Panc1 (cell line): ENCODE measurements at regions of chr16 and their contacts with region 1.

Region 1: GRCh38 chr16:30032083-30032819 is 1.2 kb upstream of the TLCD3B start:
- DNase-seq: no peak
- ATAC-seq: peak; percentile 72
- H3K4me3 ChIP-seq: no peak overlapping the region
- H3K27ac ChIP-seq: no peak overlapping the region
- H3K4me1 ChIP-seq: peaks cover 9% of the 10 kb centered on the region
- H3K27me3 ChIP-seq: no peaks in the 10 kb centered on the region
- CTCF ChIP-seq: peak; percentile 91

Region 2: DNA sequence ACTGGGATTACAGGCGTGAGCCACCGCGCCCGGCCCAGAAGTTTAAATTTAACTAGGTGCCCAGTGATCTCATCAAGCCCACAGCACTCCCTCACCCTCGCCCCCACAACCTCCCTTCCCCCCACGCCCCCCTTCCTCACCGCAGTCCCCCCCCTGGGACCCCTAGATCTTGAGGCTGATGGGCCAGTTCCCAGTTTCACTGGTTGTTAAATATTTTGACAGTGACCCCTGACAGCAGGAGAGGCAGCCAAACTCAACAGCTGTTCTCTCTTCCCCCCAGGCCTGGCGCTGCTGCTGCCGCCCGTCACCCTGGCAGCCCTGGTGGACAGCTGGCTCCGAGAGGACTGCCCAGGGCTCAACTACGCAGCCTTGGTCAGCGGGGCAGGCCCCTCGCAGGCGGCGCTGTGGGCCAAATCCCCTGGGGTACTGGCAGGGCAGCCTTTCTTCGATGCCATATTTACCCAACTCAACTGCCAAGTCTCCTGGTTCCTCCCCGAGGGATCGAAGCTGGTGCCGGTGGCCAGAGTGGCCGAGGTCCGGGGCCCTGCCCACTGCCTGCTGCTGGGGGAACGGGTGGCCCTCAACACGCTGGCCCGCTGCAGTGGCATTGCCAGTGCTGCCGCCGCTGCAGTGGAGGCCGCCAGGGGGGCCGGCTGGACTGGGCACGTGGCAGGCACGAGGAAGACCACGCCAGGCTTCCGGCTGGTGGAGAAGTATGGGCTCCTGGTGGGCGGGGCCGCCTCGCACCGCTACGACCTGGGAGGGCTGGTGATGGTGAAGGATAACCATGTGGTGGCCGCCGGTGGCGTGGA is 337.7 kb before region 1 on chr16:
- CTCF ChIA-PET with region 1: interaction called, 3 read pairs
- POLR2A ChIA-PET with region 1: no interaction called
- in situ Hi-C with region 1: no loop called
- intact Hi-C with region 1: loop called (anchors 5 kb)
- DNase-seq: no peak
- ATAC-seq: no peak
- H3K4me3 ChIP-seq: no peak overlapping the region
- H3K27ac ChIP-seq: no peak overlapping the region
- H3K4me1 ChIP-seq: no peaks in the 10 kb centered on the region
- H3K27me3 ChIP-seq: no peaks in the 10 kb centered on the region
- CTCF ChIP-seq: no peak

Region 3: DNA sequence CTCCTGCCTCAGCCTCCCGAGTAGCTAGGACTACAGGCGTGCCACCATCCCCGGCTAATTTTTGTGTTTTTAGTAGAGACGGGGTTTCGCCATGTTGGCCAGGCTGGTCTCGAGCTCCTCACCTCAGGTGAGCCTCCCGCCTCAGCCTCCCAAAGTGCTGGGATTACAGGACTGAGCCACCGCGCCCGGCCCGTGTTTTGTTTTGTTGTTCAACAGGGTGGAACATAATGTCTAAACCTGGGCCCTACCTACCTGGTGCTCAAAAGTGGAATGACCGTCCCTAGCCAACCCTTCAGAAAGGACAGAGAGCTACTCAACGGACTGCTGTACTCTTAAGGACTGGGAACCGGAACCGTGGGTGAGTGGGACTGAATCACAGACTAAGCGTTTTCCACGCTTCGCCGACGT is 242.5 kb before region 1 on chr16:
- CTCF ChIA-PET with region 1: interaction called, 11 read pairs
- POLR2A ChIA-PET with region 1: no interaction called
- in situ Hi-C with region 1: no loop called
- intact Hi-C with region 1: no loop called
- DNase-seq: no peak
- ATAC-seq: peak; percentile 17; the same call in 1 of the 2 replicates
- H3K4me3 ChIP-seq: peak overlapping the region; percentile 88 to 93
- H3K27ac ChIP-seq: peak overlapping the region; percentile 97
- H3K4me1 ChIP-seq: peaks cover 12% of the 10 kb centered on the region
- H3K27me3 ChIP-seq: no peaks in the 10 kb centered on the region
- CTCF ChIP-seq: no peak

Region 4: GRCh38 chr16:29915590-29916247 is 116.5 kb before region 1 on chr16:
- CTCF ChIA-PET with region 1: interaction called, 5 read pairs
- POLR2A ChIA-PET with region 1: no interaction called
- in situ Hi-C with region 1: no loop called
- intact Hi-C with region 1: loop called (anchors 10 kb)
- DNase-seq: no peak
- ATAC-seq: no peak
- H3K4me3 ChIP-seq: no peak overlapping the region
- H3K27ac ChIP-seq: no peak overlapping the region
- H3K4me1 ChIP-seq: no peaks in the 10 kb centered on the region
- H3K27me3 ChIP-seq: no peaks in the 10 kb centered on the region
- CTCF ChIP-seq: no peak

Region 5: GRCh38 chr16:29943846-29944669 is 88.2 kb before region 1 on chr16:
- CTCF ChIA-PET with region 1: interaction called, 12 read pairs
- POLR2A ChIA-PET with region 1: interaction called, 3 read pairs
- in situ Hi-C with region 1: no loop called
- intact Hi-C with region 1: no loop called
- DNase-seq: peak; percentile 98
- ATAC-seq: peak; percentile 99
- H3K4me3 ChIP-seq: peak overlapping the region; percentile 23 to 53
- H3K27ac ChIP-seq: peak overlapping the region; percentile 99
- H3K4me1 ChIP-seq: peaks cover 17% of the 10 kb centered on the region
- H3K27me3 ChIP-seq: no peaks in the 10 kb centered on the region
- CTCF ChIP-seq: no peak

Region 6: GRCh38 chr16:30076276-30076791 is 44.1 kb after region 1 on chr16:
- CTCF ChIA-PET with region 1: interaction called, 13 read pairs
- POLR2A ChIA-PET with region 1: no interaction called
- in situ Hi-C with region 1: no loop called
- intact Hi-C with region 1: no loop called
- DNase-seq: no peak
- ATAC-seq: peak; percentile 13
- H3K4me3 ChIP-seq: peak overlapping the region; percentile 87 to 88
- H3K27ac ChIP-seq: peak overlapping the region; percentile 92
- H3K4me1 ChIP-seq: peaks cover 13% of the 10 kb centered on the region
- H3K27me3 ChIP-seq: no peaks in the 10 kb centered on the region
- CTCF ChIP-seq: no peak